Sigmoid colon (tissue), 7 donors: ENCODE measurements at regions of chr12 and their contacts with region 1.

Region 1: DNA sequence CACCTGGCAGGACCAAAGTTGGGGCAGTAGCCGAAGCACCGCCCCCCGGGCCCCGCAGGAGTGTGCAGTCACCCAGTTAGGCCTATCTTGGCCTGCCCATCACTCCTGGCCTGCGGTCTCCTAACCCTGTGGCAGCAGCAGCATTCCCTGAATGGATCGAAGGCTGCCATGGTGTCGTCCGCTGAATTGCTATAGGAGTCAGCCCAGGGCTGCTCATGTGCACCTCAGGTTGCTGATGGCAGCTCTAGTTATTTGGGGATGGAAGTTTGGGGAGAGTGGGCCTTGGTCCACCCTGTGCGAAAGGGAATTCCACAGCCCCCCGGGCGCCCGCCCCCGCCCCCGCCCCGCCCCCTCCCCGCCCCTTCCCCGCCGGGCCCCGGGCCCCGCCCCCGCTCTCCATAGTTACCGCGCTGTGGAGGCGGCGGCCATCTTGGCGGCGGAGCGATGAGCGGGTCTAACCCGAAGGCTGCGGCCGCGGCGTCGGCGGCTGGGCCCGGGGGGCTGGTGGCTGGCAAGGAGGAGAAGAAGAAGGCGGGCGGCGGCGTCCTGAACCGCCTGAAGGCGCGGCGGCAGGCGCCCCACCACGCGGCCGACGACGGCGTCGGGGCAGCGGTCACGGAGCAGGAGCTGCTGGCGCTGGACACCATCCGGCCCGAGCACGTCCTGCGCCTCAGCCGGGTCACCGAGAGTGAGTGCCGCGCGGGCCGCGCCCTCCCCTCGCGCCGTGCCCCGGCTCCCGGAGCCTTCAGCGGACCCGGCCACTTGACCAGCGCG is at the start of gene UNC119B:
- DNase-seq: peak; percentile 73
- H3K4me3 ChIP-seq: peak within 1 kb of the TSS; percentile 68 to 97 (median 90)
- H3K27ac ChIP-seq: peak within 1 kb of the TSS; percentile 88 to 95 (median 92)
- H3K4me1 ChIP-seq: peaks cover 0 to 26% (median 20%) of the 10 kb centered on the region in 4 donors
- H3K27me3 ChIP-seq: no peaks in the 10 kb centered on the region
- CTCF ChIP-seq: no peak
- EP300 ChIP-seq: no peak
- POLR2A ChIP-seq: no peak
- total RNA-seq, gene UNC119B: 11.1 to 18.3 (median 18.1) TPM

Region 2: GRCh38 chr12:120413901-120414695 is 296.1 kb before region 1 on chr12:
- intact Hi-C with region 1: no loop called
- DNase-seq: no peak
- H3K4me3 ChIP-seq: no peak overlapping the region
- H3K27ac ChIP-seq: peak overlapping the region in 1 of 4 donors; percentile 61
- H3K4me1 ChIP-seq: no peaks in the 10 kb centered on the region
- H3K27me3 ChIP-seq: peaks cover 0 to 3% (median 0%) of the 10 kb centered on the region in 3 donors
- CTCF ChIP-seq: no peak
- EP300 ChIP-seq: no peak
- POLR2A ChIP-seq: no peak

Region 3: GRCh38 chr12:120437754-120438494 is 272.3 kb before region 1 on chr12 and contains the start of gene COX6A1:
- intact Hi-C with region 1: loop called (anchors 10 kb)
- DNase-seq: peak; percentile 98
- H3K4me3 ChIP-seq: peak within 1 kb of the TSS; percentile 68 to 87 (median 74)
- H3K27ac ChIP-seq: peak within 1 kb of the TSS; percentile 82 to 92 (median 86)
- H3K4me1 ChIP-seq: peaks cover 0 to 26% (median 19%) of the 10 kb centered on the region in 4 donors
- H3K27me3 ChIP-seq: no peaks in the 10 kb centered on the region
- CTCF ChIP-seq: no peak
- EP300 ChIP-seq: no peak
- POLR2A ChIP-seq: peak; percentile 41 to 47
- total RNA-seq, gene COX6A1: 432 to 759 (median 620) TPM

Region 4: GRCh38 chr12:120649442-120650232 is 60.6 kb before region 1 on chr12:
- intact Hi-C with region 1: loop called (anchors 2 kb)
- DNase-seq: no peak
- H3K4me3 ChIP-seq: peak overlapping the region; percentile 19 to 45 (median 42)
- H3K27ac ChIP-seq: peak overlapping the region; percentile 68 to 81 (median 77)
- H3K4me1 ChIP-seq: peaks cover 0 to 54% (median 40%) of the 10 kb centered on the region in 4 donors
- H3K27me3 ChIP-seq: peaks cover 0 to 13% (median 10%) of the 10 kb centered on the region in 3 donors
- CTCF ChIP-seq: peak in 2 of 4 experiments; percentile 4 to 48
- EP300 ChIP-seq: no peak
- POLR2A ChIP-seq: no peak

Region 5: DNA sequence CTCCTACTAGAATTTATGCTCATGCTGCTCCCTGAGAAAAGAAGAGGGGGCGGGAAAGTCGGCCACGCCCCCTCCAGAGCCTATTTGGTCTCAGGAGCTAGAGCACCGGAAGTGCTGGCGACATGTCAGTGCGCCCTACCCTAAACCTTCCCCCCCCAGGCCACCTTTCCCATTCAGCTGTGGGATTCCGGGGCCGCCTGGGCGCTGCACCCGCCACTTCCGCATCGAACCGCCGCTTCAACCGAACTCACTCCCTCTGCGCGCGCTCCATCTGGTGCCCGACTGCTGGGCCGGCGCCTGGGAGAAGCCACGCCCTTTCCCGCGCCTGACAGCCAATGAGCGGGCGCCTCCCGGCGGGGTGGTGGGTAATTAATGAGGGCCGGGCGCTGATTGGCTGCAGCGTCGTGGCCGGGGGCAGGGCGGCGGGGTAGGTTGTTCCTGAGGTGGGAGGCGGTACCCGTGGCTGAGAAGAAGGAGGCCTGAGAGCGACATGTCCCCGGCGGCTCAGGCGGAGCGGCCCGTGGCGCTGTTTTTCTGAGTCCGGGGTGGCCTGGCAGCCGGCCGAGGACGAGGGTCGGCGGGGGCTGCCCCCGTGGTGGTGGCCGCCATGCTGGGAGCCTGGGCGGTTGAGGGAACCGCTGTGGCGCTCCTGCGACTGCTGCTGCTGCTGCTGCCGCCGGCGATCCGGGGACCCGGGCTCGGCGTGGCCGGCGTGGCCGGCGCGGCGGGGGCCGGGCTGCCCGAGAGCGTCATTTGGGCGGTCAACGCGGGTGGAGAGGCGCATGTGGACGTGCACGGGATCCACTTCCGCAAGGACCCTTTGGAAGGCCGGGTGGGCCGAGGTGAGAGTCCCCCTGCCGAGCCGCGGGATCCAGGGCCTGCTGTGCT is 23.3 kb before region 1 on chr12 and contains the start of gene MLEC:
- intact Hi-C with region 1: loop called (anchors 2 kb)
- DNase-seq: peak; percentile 99
- H3K4me3 ChIP-seq: peak within 1 kb of the TSS; percentile 77 to 100 (median 89)
- H3K27ac ChIP-seq: peak within 1 kb of the TSS; percentile 92 to 97 (median 94)
- H3K4me1 ChIP-seq: peaks cover 0 to 52% (median 40%) of the 10 kb centered on the region in 4 donors
- H3K27me3 ChIP-seq: no peaks in the 10 kb centered on the region
- CTCF ChIP-seq: no peak
- EP300 ChIP-seq: no peak
- POLR2A ChIP-seq: peak; percentile 58 to 81
- total RNA-seq, gene MLEC: 30.3 to 40.3 (median 33.6) TPM

Region 6: GRCh38 chr12:120737557-120738251 is 27.5 kb after region 1 on chr12:
- intact Hi-C with region 1: no loop called
- DNase-seq: no peak
- H3K4me3 ChIP-seq: no peak overlapping the region
- H3K27ac ChIP-seq: no peak overlapping the region
- H3K4me1 ChIP-seq: no peaks in the 10 kb centered on the region
- H3K27me3 ChIP-seq: no peaks in the 10 kb centered on the region
- CTCF ChIP-seq: no peak
- EP300 ChIP-seq: no peak
- POLR2A ChIP-seq: no peak

Region 7: DNA sequence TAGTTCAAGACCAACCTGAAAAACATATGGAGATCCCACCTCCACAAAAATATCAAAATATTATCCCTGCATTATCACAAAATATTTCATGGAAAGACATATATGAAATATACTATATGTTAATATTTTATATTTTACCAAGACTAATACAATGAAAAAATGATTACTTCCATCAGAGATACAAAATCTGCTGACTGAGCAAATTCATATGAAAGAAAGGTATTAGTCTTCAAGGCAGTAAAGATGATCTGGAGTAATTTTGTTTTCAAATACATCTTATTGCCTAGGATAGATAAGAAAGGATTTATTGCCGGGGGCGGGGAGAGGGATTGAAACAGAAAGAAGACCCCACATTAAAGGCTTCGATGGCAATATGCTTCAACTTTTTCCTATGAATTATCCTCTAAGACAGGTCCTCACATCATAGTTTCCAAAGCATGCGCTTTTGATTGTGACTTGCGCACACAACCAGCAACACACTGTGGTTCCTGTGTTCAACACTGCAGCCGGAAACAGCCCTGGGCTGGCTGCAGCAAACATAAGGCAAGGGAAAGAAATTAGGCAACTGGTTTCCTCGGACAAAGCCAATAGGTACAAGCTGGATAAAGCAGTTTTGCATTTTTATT is 110.8 kb after region 1 on chr12:
- intact Hi-C with region 1: no loop called
- DNase-seq: no peak
- H3K4me3 ChIP-seq: no peak overlapping the region
- H3K27ac ChIP-seq: no peak overlapping the region
- H3K4me1 ChIP-seq: peaks cover 0 to 47% (median 5%) of the 10 kb centered on the region in 4 donors
- H3K27me3 ChIP-seq: no peaks in the 10 kb centered on the region
- CTCF ChIP-seq: no peak
- EP300 ChIP-seq: no peak
- POLR2A ChIP-seq: no peak

Region 8: DNA sequence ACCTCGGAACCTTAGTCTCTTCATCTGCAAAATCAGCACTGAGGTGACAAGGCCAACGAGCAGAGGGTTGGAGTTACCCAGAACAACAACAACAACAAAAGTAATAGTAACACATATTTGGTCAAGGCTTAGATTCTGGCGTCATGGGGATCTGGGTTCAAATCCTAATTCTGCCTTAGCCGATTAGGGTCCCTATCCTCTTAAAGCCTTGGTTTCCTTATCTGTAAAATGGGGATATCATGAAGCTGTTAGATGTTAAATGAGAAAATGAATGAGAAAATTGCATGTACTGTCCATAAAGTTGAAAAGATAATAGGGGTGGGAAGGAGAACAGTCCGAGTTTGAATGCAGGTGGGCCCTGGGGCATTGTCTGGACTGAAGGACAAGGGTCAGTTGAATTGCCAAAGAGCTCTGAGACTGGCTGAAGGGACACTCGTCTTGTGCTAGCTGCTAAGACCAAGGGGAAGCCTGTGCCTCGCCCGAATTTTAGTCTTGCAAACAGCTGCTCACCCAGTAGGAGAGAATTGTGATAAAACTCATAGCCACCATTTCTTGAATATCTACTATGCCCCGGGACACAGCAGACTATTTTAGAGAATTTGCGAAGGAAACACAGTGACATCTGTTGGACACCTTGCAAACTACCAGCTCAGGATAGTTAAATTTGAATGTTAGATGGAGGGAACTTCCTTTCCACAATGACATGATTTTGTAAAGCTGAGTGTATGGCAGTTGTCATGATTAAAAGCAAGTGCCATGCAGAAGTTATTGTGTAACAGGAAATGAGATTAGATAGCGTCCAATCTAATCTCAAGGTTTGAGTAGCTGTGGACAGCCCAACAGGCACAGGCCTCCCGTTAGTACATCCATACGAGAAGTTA is 261.3 kb after region 1 on chr12:
- intact Hi-C with region 1: loop called (anchors 10 kb)
- DNase-seq: no peak
- H3K4me3 ChIP-seq: no peak overlapping the region
- H3K27ac ChIP-seq: no peak overlapping the region
- H3K4me1 ChIP-seq: no peaks in the 10 kb centered on the region
- H3K27me3 ChIP-seq: no peaks in the 10 kb centered on the region
- CTCF ChIP-seq: peak; percentile 36 to 72 (median 64)
- EP300 ChIP-seq: no peak
- POLR2A ChIP-seq: no peak